Cardiac septum (tissue), 1 donor: ENCODE measurements at regions of chr2 and their contacts with region 1.

Region 1: GRCh38 chr2:238938401-238939055 is 90.6 kb downstream of the TWIST2 start:
- DNase-seq: no peak

Region 2: GRCh38 chr2:238847841-238848690 is 90.5 kb before region 1 on chr2 and contains the start of gene TWIST2:
- intact Hi-C with region 1: loop called (anchors 5 kb)
- DNase-seq: no peak
- total RNA-seq, gene TWIST2: 0.83 TPM

Region 3: DNA sequence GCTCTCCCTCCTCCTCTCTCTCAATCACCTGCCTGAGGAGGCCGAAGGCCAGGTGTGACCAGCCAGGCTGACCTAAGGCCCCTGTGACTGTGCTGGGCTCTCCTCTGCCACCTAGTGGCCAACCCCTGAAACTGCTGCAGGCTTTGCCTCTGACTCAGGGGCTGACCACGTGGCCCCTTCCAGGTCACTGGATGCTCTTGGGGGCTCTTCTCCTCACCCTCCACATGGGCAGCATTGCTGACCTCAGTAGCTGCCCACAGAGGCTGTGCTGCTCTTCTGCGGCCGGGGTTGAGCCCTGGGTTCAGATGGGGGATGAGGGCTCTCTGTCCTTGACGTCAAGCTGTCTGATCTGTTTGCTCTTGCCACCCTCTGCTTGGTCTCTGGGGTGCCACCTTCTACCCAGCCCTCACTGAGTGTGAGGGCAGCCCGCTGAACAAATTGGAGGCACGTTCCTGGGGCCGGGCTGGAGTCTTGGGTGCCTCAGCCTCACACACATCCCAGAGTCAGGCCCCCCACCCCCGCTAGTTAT is 32.1 kb after region 1 on chr2:
- intact Hi-C with region 1: no loop called
- DNase-seq: no peak